AG04449 (cell line): ENCODE measurements at regions of chr22 and their contacts with region 1.

Region 1: DNA sequence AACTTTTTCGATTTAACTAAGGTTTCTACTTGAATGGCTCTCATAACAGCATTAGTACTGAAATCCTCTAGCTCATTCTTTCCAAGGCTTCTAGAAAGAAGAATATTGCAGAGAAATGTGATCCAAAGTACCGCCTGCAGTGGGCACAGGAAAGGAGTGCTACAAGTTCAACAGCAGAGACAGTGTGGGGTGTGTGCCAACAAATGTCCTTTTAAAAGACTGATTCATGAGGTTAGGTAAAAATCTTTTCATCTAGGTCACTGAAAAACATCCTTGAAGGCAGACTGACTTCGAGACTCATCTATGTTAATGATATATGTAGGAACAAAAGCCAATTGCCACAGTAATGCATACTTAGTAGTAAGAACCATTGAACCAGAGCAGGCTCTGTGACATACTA is 349.1 kb upstream of the PITPNB start:
- DNase-seq: no peak
- H3K4me3 ChIP-seq: no peak overlapping the region
- CTCF ChIP-seq: no peak

Region 2: DNA sequence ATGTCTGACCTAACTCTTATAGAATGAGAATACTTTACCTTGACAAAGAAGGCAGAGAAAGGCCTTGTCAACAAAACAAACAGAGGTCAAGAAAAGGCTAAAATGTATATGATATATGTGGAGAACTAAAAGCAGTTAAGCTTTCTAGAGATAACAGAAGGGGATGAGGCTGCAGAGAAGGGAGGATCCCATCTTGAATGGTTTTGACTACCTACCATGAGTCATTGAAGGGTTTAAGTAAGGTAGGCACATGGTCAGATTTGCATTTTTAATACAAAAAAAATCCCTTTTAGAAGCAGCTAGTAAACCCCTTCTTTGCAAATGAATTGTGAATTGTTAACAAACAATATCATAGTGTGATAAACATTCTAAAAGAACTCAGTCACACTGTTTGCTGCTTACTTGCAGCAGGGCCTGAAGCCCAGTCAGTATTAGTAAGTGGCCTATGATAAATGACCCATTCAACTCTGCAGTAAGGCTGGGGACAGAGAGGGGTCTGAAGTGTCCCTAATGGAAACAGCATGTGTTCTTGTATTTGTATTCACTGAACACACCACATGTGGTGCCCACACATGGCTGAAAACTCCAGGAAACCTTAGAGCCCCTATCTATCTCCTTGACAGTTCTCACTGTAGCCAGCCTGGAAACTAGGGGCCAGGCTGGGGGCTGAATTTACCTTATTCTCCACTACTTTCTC is 20.4 kb before region 1 on chr22:
- CTCF ChIA-PET with region 1: interaction called, 12 read pairs
- POLR2A ChIA-PET with region 1: no interaction called
- DNase-seq: no peak
- H3K4me3 ChIP-seq: no peak overlapping the region
- CTCF ChIP-seq: no peak